ENCODE measurements at regions of chr18 and their contacts with region 1.

Region 1: GRCh38 chr18:49250816-49251388 is 209.5 kb downstream of the DYM start:
- DNase-seq: no peak
- H3K4me3 ChIP-seq: no peak overlapping the region
- H3K4me3 Mint-ChIP-seq: no peak overlapping the region
- H3K27ac Mint-ChIP-seq: no peak overlapping the region
- H3K4me1 ChIP-seq: no peaks in the 10 kb centered on the region
- H3K4me1 Mint-ChIP-seq: peaks cover 9% of the 10 kb centered on the region
- H3K27me3 ChIP-seq: no peaks in the 10 kb centered on the region
- H3K27me3 Mint-ChIP-seq: no peaks in the 10 kb centered on the region
- CTCF ChIP-seq: peak in 1 of 2 experiments; percentile 53

Region 2: GRCh38 chr18:48959921-48960920 is 290.7 kb before region 1 on chr18:
- CTCF ChIA-PET with region 1: no interaction called
- POLR2A ChIA-PET with region 1: no interaction called
- intact Hi-C with region 1: no loop called
- DNase-seq: no peak
- H3K4me3 ChIP-seq: no peak overlapping the region
- H3K4me3 Mint-ChIP-seq: no peak overlapping the region
- H3K27ac Mint-ChIP-seq: no peak overlapping the region
- H3K4me1 ChIP-seq: no peaks in the 10 kb centered on the region
- H3K4me1 Mint-ChIP-seq: peaks cover 6% of the 10 kb centered on the region
- H3K27me3 ChIP-seq: no peaks in the 10 kb centered on the region
- H3K27me3 Mint-ChIP-seq: no peaks in the 10 kb centered on the region
- CTCF ChIP-seq: no peak

Region 3: GRCh38 chr18:49335677-49336076 is 84.8 kb after region 1 on chr18:
- CTCF ChIA-PET with region 1: no interaction called
- POLR2A ChIA-PET with region 1: no interaction called
- intact Hi-C with region 1: loop called (anchors 5 kb)
- DNase-seq: peak in 1 of 2 experiments; percentile 16
- H3K4me3 ChIP-seq: no peak overlapping the region
- H3K4me3 Mint-ChIP-seq: no peak overlapping the region
- H3K27ac Mint-ChIP-seq: no peak overlapping the region
- H3K4me1 ChIP-seq: no peaks in the 10 kb centered on the region
- H3K4me1 Mint-ChIP-seq: no peaks in the 10 kb centered on the region
- H3K27me3 ChIP-seq: no peaks in the 10 kb centered on the region
- H3K27me3 Mint-ChIP-seq: no peaks in the 10 kb centered on the region
- CTCF ChIP-seq: no peak

Region 4: GRCh38 chr18:49412679-49413078 is 161.8 kb after region 1 on chr18:
- CTCF ChIA-PET with region 1: interaction called, 3 read pairs
- POLR2A ChIA-PET with region 1: no interaction called
- intact Hi-C with region 1: loop called (anchors 2 kb)
- DNase-seq: no peak
- H3K4me3 ChIP-seq: no peak overlapping the region
- H3K4me3 Mint-ChIP-seq: no peak overlapping the region
- H3K27ac Mint-ChIP-seq: no peak overlapping the region
- H3K4me1 ChIP-seq: no peaks in the 10 kb centered on the region
- H3K4me1 Mint-ChIP-seq: no peaks in the 10 kb centered on the region
- H3K27me3 ChIP-seq: no peaks in the 10 kb centered on the region
- H3K27me3 Mint-ChIP-seq: no peaks in the 10 kb centered on the region
- CTCF ChIP-seq: no peak

Region 5: DNA sequence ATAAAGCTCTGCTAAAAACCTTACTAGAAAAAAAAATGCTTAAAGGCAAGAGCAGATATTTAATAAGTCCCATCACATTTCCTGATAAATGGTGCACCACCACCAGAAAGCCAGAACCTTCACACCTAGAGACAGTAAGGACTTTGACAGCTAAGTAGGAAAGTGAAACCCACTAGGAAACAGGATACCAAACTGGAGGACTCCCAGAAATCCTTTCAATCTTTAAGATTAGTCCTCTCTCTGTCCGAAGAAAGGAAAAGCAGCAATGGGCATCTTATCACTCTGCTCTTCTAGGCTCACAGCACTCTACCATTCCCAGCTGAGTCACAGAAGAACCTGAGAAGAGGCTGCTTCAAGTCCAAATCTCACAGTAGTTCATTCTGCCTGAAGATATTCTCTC is 205.9 kb after region 1 on chr18:
- CTCF ChIA-PET with region 1: no interaction called
- POLR2A ChIA-PET with region 1: no interaction called
- intact Hi-C with region 1: no loop called
- DNase-seq: no peak
- H3K4me3 ChIP-seq: no peak overlapping the region
- H3K4me3 Mint-ChIP-seq: no peak overlapping the region
- H3K27ac Mint-ChIP-seq: no peak overlapping the region
- H3K4me1 ChIP-seq: no peaks in the 10 kb centered on the region
- H3K4me1 Mint-ChIP-seq: peaks cover 8% of the 10 kb centered on the region
- H3K27me3 ChIP-seq: no peaks in the 10 kb centered on the region
- H3K27me3 Mint-ChIP-seq: no peaks in the 10 kb centered on the region
- CTCF ChIP-seq: no peak